HEK293T (cell line): ENCODE measurements at regions of chr1 and their contacts with region 1.

Region 1: GRCh38 chr1:1430114-1430982 is 5.1 kb upstream of the VWA1 start:
- DNase-seq: peak; percentile 32

Region 2: GRCh38 chr1:1406817-1407635 is 23.3 kb before region 1 on chr1 and contains the start of gene MRPL20:
- CTCF ChIA-PET with region 1: no interaction called
- POLR2A ChIA-PET with region 1: interaction called, 10 read pairs
- DNase-seq: peak; percentile 93